ENCODE measurements at regions of chrX and their contacts with region 1.

Region 1: DNA sequence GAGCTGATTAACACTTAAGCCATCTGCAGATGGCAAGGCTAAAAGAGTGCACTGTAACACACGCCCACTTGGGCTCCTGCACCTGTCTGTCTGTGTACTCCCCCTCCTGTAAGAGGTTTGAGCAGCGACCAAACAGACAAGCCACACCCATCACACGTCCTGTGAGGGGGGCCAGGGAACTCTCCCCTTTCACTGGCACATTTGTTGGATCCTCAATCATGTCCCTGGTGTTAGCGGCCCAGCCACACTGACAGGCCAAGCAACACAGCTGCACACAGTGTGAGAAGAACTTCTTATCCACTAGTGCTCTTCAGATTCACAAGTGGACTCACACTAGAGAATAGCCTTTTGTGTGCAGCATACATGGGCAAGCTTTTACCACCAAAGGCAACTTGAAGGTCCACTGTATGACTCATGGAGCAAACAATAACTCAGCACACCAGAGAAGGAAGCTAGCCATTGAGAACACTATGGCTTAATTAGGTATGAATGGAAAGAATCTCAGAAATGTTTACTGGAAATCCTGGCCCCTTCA is 29.1 kb upstream of the UTP14A start:
- DNase-seq: no peak
- ATAC-seq: no peak
- H3K4me3 ChIP-seq: no peak overlapping the region
- H3K4me3 Mint-ChIP-seq: no peak overlapping the region
- H3K27ac ChIP-seq: no peak overlapping the region
- H3K27ac Mint-ChIP-seq: no peak overlapping the region
- H3K4me1 ChIP-seq: no peaks in the 10 kb centered on the region
- H3K4me1 Mint-ChIP-seq: no peaks in the 10 kb centered on the region
- H3K27me3 ChIP-seq: no peaks in the 10 kb centered on the region
- H3K27me3 Mint-ChIP-seq: no peaks in the 10 kb centered on the region

Region 2: DNA sequence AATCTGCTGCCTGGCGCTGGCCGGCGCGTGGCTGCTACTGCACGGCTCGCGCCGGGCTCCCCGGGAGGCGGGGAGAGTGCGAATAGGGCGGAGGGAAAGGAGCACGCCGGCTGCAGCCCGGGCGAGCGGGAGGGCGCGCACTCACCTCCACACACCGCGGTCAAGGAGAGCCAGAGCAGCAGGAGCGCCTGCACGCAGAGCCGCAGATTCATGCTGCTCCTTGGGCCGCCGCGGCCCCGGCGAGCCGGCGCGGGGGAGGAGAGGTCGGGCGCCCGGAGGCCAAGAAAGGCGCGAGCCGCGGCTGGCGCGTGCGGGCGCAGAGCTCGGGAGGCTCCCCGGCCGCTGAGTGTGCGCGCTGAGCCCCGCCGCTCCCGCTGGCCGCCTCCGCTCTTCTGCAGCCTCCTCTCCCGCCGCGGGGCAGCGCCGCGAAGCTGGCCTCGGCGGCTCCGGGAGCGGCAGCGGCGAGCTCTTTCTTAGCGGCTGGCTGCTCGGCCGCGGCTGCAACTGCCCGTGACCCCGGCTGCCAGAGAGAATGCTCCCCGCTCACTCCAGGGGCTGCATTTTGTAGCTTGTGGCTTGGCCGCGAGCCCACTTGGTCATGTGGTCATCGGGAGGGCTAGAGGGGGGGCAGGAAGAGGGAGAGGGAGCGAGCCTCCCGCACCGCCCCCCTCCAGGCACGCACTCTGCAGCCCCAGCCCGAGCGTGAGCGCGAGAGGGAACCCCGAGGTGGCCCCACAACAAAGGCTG is 222.2 kb before region 1 on chrX and contains the start of gene APLN:
- CTCF ChIA-PET with region 1: no interaction called
- POLR2A ChIA-PET with region 1: no interaction called
- intact Hi-C with region 1: loop called in 1 of 2 experiments (anchors 1 kb)
- DNase-seq: peak in 2 of 9 donors; percentile 18 to 28
- ATAC-seq: peak; percentile 64
- H3K4me3 ChIP-seq: peak within 1 kb of the TSS; percentile 9
- H3K4me3 Mint-ChIP-seq: peak within 1 kb of the TSS; percentile 54 to 85 (median 68)
- H3K27ac ChIP-seq: no peak within 1 kb of the TSS
- H3K27ac Mint-ChIP-seq: peak within 1 kb of the TSS in 1 of 9 donors; percentile 9
- H3K4me1 ChIP-seq: peaks cover 3 to 7% of the 10 kb centered on the region in 2 donors
- H3K4me1 Mint-ChIP-seq: peaks cover 6 to 12% (median 9%) of the 10 kb centered on the region in 7 donors
- H3K27me3 ChIP-seq: no peaks in the 10 kb centered on the region
- H3K27me3 Mint-ChIP-seq: peaks cover 4 to 25% (median 5%) of the 10 kb centered on the region in 5 donors
- total RNA-seq, gene APLN: 0.10 TPM in 1 of 5 experiments, not detected in the others

Measured in naive thymus-derived CD4-positive, alpha-beta T cell (primary cell).